ENCODE measurements at regions of chr2 and their contacts with region 1.

Region 1: GRCh38 chr2:57516698-57517340 is 529.8 kb upstream of the VRK2 start:
- DNase-seq: peak in 2 of 9 experiments; percentile 7 to 27
- ATAC-seq: no peak
- H3K4me3 ChIP-seq: no peak overlapping the region
- H3K4me3 Mint-ChIP-seq: no peak overlapping the region
- H3K27ac ChIP-seq: no peak overlapping the region
- H3K27ac Mint-ChIP-seq: no peak overlapping the region
- H3K4me1 ChIP-seq: no peaks in the 10 kb centered on the region
- H3K4me1 Mint-ChIP-seq: no peaks in the 10 kb centered on the region
- H3K27me3 ChIP-seq: no peaks in the 10 kb centered on the region
- H3K27me3 Mint-ChIP-seq: no peaks in the 10 kb centered on the region
- CTCF ChIP-seq: peak; percentile 61

Region 2: GRCh38 chr2:56183643-56184499 is 1332.9 kb before region 1 on chr2 and contains the start of gene CCDC85A:
- CTCF ChIA-PET with region 1: interaction called, 4 read pairs
- POLR2A ChIA-PET with region 1: no interaction called
- intact Hi-C with region 1: loop called in 1 of 2 experiments (anchors 1 kb)
- DNase-seq: peak; percentile 3 to 55 (median 32)
- ATAC-seq: no peak
- H3K4me3 ChIP-seq: peak within 1 kb of the TSS in 1 of 2 experiments; percentile 37
- H3K4me3 Mint-ChIP-seq: peak within 1 kb of the TSS; percentile 38
- H3K27ac ChIP-seq: no peak within 1 kb of the TSS
- H3K27ac Mint-ChIP-seq: no peak within 1 kb of the TSS
- H3K4me1 ChIP-seq: no peaks in the 10 kb centered on the region
- H3K4me1 Mint-ChIP-seq: peaks cover 6% of the 10 kb centered on the region
- H3K27me3 ChIP-seq: peaks cover 0 to 9% of the 10 kb centered on the region in 2 experiments
- H3K27me3 Mint-ChIP-seq: peaks cover 54% of the 10 kb centered on the region
- CTCF ChIP-seq: peak; percentile 41
- total RNA-seq, gene CCDC85A: not detected